Mammary epithelial cell (primary cell): ENCODE measurements at regions of chr11 and their contacts with region 1.

Region 1: DNA sequence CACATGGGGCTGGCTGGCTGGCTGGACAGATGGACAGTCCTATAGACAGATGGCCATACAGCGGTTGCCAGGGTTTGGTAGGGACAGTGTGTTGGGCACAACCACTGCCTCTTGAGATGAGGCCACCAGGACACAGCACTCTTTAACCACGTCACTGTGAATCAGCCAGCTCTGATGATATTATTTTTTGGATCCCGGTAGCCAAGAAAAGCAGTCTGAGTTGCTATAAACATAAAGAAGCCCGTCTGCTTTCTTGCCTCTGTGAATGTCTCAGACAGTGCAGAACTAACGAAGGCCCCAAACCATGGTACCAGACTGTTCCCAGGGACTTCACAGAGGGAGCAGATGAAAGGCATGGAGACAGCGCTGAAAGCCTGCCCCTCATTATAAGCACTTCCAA is 115.9 kb upstream of the CSNK2A3 start:
- DNase-seq: no peak
- H3K4me3 ChIP-seq: no peak overlapping the region
- H3K27ac ChIP-seq: no peak overlapping the region
- H3K4me1 ChIP-seq: no peaks in the 10 kb centered on the region
- H3K27me3 ChIP-seq: no peaks in the 10 kb centered on the region
- CTCF ChIP-seq: no peak

Region 2: GRCh38 chr11:11370255-11370961 is 98.5 kb before region 1 on chr11:
- CTCF ChIA-PET with region 1: no interaction called
- dilution Hi-C with region 1: loop called (anchors 5 kb)
- in situ Hi-C with region 1: no loop called
- intact Hi-C with region 1: no loop called
- DNase-seq: no peak
- H3K4me3 ChIP-seq: no peak overlapping the region
- H3K27ac ChIP-seq: no peak overlapping the region
- H3K4me1 ChIP-seq: peaks cover 5% of the 10 kb centered on the region
- H3K27me3 ChIP-seq: no peaks in the 10 kb centered on the region
- CTCF ChIP-seq: no peak